ENCODE measurements at regions of chr16 and their contacts with region 1.

Region 1: DNA sequence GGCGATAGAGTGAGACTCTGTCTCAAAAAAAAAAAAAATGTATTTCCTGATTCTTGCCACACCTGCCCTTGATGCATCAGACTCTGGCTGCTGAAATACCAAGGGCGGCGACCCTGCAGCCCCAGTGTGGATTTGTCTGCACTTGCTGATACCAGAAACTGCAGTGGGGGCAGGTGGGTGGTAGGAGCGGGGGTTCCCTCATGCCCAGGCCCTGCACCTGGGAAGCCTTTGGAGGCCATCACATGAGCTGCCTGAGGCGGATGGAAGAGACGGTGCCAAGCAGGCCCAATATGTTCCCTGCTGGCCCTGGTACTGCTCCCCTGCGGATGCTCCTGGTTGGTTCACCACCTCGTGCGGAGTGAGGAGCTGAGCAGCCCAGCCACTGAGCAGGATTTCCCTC is 50.6 kb downstream of the MARF1 start:
- DNase-seq: peak; percentile 48
- H3K4me3 Mint-ChIP-seq: no peak overlapping the region
- H3K27ac Mint-ChIP-seq: peak overlapping the region; percentile 73
- H3K4me1 Mint-ChIP-seq: peaks cover 32% of the 10 kb centered on the region
- H3K27me3 Mint-ChIP-seq: no peaks in the 10 kb centered on the region
- CTCF ChIP-seq: no peak

Region 2: DNA sequence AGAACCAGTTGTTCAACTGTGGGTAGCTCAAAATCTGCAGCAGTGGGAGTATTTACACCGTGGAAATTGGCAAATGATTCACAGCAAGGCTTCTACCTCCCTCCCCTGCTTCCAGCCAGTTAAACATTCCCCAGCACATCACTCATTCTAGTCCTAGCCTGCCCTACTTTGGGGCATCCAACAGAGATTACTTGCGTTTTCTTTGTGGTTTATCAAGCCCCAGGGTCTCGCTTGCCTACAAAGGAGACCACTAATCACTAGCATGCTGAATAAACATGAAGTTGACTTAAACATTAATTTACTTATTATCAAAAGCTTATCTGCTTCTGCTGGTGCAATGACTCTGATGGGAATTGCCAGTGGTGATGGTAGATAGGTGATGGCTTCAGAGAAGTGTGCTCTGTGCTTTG is 43.8 kb before region 1 on chr16:
- CTCF ChIA-PET with region 1: interaction called, 12 read pairs
- intact Hi-C with region 1: loop called (anchors 2 kb)
- DNase-seq: peak; percentile 8
- H3K4me3 Mint-ChIP-seq: no peak overlapping the region
- H3K27ac Mint-ChIP-seq: no peak overlapping the region
- H3K4me1 Mint-ChIP-seq: peaks cover 33% of the 10 kb centered on the region
- H3K27me3 Mint-ChIP-seq: no peaks in the 10 kb centered on the region
- CTCF ChIP-seq: no peak

Measured in Calu3 (cell line).